CD8-positive, alpha-beta memory T cell (primary cell): ENCODE measurements at regions of chr16 and their contacts with region 1.

Region 1: DNA sequence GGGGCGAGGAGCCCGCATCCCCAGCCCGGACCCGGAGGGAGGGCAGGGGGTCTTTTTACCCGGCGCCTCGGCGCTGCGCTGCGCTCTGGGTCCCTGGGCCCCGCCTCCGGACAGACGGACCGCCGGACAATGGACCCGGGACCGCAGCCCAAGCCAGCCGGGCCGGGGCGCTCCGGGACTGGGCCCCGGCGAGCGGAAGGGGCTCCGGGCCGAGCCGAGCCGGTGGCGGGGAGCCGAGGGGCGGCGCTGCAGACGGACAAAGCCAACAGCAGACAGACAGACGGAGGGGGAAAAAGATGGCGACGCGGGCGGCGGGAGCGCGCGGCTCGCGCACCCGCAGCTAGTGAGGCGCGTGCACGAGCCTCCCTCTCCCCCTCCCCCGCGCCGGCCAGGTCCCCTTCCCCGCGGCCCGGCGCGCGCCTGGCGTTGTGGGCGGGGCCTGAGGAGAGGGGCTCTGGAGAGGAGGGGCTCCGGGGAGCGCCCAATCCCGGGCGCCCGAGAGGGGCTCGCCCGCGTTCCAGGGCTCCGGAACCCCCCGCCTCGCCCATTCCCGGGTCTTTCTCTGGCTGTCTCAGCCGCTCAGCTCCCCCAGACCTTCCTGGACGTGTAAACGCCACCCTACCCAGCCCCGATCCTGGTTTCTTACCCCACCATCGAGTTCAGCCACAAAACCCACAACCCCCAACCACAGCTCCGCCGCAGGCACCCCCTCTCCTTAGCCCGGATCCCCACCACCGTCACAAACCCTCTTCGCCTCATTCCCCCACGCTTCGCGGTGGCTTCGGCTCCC is at the start of gene ZNF821:
- DNase-seq: peak; percentile 74 to 81 (median 78)
- H3K4me3 ChIP-seq: peak within 1 kb of the TSS; percentile 77
- H3K4me3 Mint-ChIP-seq: peak within 1 kb of the TSS; percentile 92 to 99 (median 96)
- H3K27ac ChIP-seq: peak within 1 kb of the TSS; percentile 68
- H3K27ac Mint-ChIP-seq: peak within 1 kb of the TSS; percentile 94 to 98 (median 96)
- H3K4me1 ChIP-seq: peaks cover 37% of the 10 kb centered on the region
- H3K4me1 Mint-ChIP-seq: peaks cover 49 to 57% (median 54%) of the 10 kb centered on the region in 3 donors
- H3K27me3 ChIP-seq: no peaks in the 10 kb centered on the region
- H3K27me3 Mint-ChIP-seq: peaks cover 0 to 4% of the 10 kb centered on the region in 2 donors
- total RNA-seq, gene ZNF821: 3.3 to 5.3 TPM

Region 2: DNA sequence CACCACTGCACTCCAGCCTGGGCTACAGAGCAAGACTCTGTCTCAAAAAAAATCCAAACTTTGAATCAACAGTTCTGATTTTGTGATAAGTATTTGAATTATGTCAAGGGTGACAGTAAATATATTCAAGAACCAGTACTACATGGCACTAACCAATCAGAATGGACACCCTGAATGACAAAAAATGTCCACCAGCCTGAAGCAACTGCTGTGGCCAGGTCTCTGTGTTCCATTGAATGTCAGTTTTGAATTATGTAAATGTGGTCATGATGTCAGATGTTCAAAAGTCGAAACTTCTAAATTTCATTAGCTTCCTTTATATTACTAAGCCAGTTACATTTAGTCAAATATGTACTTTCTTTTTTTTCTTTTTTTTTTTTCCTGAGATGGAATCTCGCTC is 53.7 kb before region 1 on chr16:
- CTCF ChIA-PET with region 1: interaction called, 10 read pairs
- POLR2A ChIA-PET with region 1: no interaction called
- DNase-seq: no peak
- H3K4me3 ChIP-seq: no peak overlapping the region
- H3K4me3 Mint-ChIP-seq: no peak overlapping the region
- H3K27ac ChIP-seq: no peak overlapping the region
- H3K27ac Mint-ChIP-seq: no peak overlapping the region
- H3K4me1 ChIP-seq: no peaks in the 10 kb centered on the region
- H3K4me1 Mint-ChIP-seq: peaks cover 0 to 8% (median 0%) of the 10 kb centered on the region in 3 donors
- H3K27me3 ChIP-seq: no peaks in the 10 kb centered on the region
- H3K27me3 Mint-ChIP-seq: peaks cover 0 to 2% of the 10 kb centered on the region in 2 donors

Region 3: DNA sequence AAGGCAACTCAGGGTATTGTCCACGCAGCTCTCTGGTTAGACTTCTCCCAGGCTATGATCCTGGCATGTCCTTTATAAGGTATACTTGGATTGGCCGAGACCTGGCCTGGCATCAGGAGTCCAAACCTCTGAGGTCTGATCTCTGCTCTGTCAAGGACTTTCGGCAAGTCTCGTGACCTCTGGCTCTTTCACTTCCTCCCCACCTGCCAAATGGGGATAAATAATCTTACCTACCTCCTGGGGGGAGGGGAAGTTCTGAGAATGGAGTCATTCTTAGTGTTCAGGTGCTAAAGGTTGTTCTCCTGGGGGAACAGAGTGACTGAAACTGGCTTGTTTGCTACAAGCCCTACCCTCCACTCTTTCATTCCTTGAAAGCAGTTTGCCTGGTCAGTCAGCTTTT is 30.6 kb before region 1 on chr16:
- CTCF ChIA-PET with region 1: interaction called, 57 read pairs
- POLR2A ChIA-PET with region 1: interaction called, 14 read pairs
- DNase-seq: no peak
- H3K4me3 ChIP-seq: no peak overlapping the region
- H3K4me3 Mint-ChIP-seq: peak overlapping the region in 2 of 7 donors; percentile 14 to 23
- H3K27ac ChIP-seq: no peak overlapping the region
- H3K27ac Mint-ChIP-seq: peak overlapping the region; percentile 17 to 93 (median 74)
- H3K4me1 ChIP-seq: peaks cover 38% of the 10 kb centered on the region
- H3K4me1 Mint-ChIP-seq: peaks cover 58 to 81% (median 76%) of the 10 kb centered on the region in 3 donors
- H3K27me3 ChIP-seq: no peaks in the 10 kb centered on the region
- H3K27me3 Mint-ChIP-seq: no peaks in the 10 kb centered on the region

Region 4: DNA sequence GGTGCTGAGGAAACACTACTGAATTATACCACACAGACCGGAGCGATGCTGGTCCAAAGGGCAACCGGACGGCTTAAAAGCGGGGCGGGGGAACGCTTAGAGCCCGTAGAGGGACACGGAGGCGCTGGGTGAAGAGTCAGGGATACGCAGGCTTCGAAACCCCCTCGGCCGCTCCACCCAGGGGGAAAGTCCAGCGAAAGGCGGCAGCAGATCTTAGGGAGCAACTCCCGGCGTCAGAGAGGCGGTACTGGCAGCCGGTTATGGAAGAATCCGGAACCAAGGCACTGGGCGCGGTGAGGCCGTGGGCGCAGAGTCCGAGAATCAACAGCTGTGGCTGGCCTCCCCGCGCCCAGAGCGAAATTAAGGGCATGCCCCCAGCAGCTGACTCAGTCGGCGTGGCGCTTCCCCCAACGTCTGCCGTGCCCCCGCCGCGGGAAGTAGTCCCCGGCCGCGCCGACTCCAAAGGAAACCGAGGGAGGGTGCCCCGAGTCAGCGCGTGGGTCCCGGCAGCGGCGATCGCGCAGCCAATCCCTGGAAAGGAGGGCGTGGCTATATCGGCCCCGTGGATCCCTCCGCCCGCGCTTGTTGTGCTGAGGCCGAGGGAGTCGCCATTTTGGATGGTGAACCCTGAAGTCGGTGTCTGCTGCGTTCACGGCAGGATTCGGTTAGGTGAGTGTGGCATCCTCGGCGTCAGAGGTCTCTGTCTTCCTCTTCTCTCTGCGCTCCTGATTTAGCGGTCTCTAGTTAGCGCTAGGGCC is 11.1 kb after region 1 on chr16 and contains the start of gene IST1:
- CTCF ChIA-PET with region 1: interaction called, 123 read pairs
- POLR2A ChIA-PET with region 1: interaction called, 73 read pairs
- DNase-seq: peak; percentile 96 to 99 (median 98)
- H3K4me3 ChIP-seq: peak within 1 kb of the TSS; percentile 96
- H3K4me3 Mint-ChIP-seq: peak within 1 kb of the TSS; percentile 91 to 99 (median 98)
- H3K27ac ChIP-seq: peak within 1 kb of the TSS; percentile 89
- H3K27ac Mint-ChIP-seq: peak within 1 kb of the TSS; percentile 95 to 99 (median 97)
- H3K4me1 ChIP-seq: peaks cover 39% of the 10 kb centered on the region
- H3K4me1 Mint-ChIP-seq: peaks cover 29 to 37% (median 32%) of the 10 kb centered on the region in 3 donors
- H3K27me3 ChIP-seq: no peaks in the 10 kb centered on the region
- H3K27me3 Mint-ChIP-seq: peaks cover 0 to 3% of the 10 kb centered on the region in 2 donors
- total RNA-seq, gene IST1: 172 to 177 TPM